HEK293 (cell line): ENCODE measurements at regions of chr13 and their contacts with region 1.

Region 1: DNA sequence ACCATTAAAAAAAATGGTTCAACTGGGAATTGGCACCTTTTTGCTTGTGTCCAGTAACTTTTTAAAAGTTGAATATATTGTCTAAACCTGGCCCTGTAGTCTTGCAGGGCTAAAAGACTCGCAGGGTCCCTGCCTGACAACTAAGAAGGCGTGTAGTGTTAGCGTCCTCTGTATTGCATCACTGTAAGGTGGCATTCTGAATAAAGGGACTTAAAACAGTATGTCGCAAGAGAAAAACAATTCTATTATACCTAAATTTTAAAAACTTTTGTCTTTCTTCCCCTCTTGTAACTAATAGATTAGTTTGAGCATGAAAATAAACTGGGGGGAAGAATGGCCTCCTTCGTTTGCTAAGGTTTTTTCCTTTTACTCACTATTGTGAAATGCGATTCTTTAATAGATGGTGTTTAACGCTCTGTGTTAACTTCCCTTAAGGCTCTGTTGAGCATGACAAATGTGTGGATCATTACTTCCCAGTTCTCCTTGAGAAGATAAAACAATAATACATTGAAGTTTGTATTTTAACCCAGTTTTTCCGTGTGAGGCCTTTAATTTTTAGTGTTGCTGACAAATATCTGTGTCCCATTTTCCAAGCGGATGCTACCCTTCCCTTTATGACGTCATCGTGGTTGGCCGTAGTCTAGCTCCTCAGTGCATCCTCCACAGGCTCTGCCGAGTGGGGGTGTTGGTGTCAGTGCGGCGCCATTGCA is 134.6 kb downstream of the KATNAL1 start:
- H3K4me3 ChIP-seq: no peak overlapping the region
- H3K27ac ChIP-seq: no peak overlapping the region
- H3K4me1 ChIP-seq: no peaks in the 10 kb centered on the region
- CTCF ChIP-seq: no peak

Region 2: GRCh38 chr13:30157616-30157993 is 15.1 kb before region 1 on chr13:
- CTCF ChIA-PET with region 1: no interaction called
- POLR2A ChIA-PET with region 1: interaction called, 13 read pairs
- H3K4me3 ChIP-seq: no peak overlapping the region
- H3K27ac ChIP-seq: no peak overlapping the region
- H3K4me1 ChIP-seq: no peaks in the 10 kb centered on the region
- CTCF ChIP-seq: no peak